Naive thymus-derived CD4-positive, alpha-beta T cell (primary cell): ENCODE measurements at regions of chr15 and their contacts with region 1.

Region 1: DNA sequence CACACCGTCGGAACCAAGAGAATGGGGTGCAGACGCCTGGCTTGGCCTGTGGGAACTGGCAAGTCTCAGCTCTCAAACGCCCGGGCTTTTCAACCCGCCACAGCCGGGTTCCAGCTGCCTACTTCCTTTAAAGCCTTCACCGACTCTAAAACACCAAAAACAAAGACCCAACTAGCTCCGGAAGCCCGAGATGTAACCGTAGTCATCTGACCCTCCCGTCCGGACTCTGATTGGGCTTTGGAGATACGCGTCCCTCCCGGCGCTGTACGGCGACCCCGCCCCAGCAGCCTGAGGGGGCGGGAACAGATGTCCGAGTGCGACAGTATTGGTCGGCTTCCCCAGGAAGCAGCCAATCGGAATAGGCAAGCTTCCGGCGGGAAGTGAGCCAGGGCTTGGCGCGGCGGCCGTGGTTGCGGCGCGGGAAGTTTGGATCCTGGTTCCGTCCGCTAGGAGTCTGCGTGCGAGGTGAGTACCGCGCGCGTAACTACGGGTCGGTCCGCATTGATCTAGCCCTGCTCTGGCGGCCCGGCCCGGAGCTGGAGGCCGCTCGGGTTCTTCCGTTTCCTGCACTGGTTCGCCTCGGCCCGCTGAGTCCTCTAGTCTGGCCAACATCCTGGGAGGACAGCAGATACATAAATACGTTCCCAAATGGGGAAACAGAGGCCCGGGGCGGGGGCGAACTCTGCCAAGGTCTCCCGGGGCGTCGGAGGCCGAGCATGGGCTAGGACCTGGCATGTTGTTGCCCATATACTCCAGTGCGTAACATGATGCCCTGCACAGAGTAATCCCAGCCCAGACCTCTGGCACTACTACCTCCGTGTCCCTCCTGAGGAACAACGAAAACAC is at the start of gene BLM:
- DNase-seq: peak; percentile 83 to 98 (median 96)
- ATAC-seq: peak; percentile 100
- H3K4me3 ChIP-seq: peak within 1 kb of the TSS; percentile 75
- H3K4me3 Mint-ChIP-seq: peak within 1 kb of the TSS; percentile 92 to 98 (median 95)
- H3K27ac ChIP-seq: peak within 1 kb of the TSS; percentile 85
- H3K27ac Mint-ChIP-seq: peak within 1 kb of the TSS; percentile 81 to 97 (median 95)
- H3K4me1 ChIP-seq: peaks cover 5 to 9% of the 10 kb centered on the region in 2 donors
- H3K4me1 Mint-ChIP-seq: peaks cover 20 to 35% (median 30%) of the 10 kb centered on the region in 7 donors
- H3K27me3 ChIP-seq: no peaks in the 10 kb centered on the region
- H3K27me3 Mint-ChIP-seq: no peaks in the 10 kb centered on the region
- total RNA-seq, gene BLM: 3.5 to 53.1 (median 6.6) TPM

Region 2: DNA sequence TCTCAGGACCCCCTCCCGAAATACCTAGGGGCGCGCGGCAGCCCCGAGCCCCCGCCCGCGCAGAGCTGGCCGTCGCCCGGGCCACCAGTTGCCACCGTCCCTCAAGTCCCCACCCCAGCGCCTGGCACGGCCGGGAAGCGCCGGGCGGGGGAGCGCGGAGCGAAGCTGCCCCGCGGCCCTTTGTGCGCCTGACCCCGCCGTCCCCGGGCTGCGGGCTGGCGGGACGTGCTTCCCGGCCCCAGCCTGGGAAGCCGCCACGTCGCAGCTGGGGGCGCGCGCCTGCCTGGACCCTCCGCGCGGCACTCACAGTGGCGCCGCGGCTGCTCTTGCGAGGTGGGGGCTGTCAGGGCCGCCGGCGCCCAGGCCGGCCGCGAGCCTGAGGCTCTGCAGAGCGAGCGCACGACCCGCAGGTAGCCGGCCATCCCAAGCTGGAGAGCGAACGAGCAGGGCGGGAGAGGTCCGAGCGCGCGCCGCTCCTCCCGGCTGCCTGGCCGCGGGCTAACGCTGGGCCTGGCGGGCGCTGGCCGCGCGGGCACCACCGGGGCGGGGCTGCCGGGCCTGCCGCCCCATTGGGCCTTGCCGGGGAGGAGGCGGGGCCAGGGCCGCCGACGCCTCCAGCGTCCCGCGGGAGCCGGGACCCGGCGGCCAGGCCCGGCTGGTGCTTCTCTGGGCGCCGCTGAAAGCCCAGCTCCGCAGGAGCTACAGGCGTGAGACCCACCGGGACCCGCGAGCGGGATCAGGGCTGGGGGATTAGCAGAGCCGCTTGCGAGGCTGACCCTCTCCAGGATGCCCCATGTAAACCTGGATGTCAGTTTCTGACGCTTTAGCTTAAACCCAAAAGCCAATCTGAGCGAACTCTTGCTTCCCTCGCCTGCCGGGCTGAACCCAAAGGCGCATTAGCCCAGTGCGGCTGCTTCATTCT is 615.0 kb before region 1 on chr15 and contains the start of gene IDH2:
- CTCF ChIA-PET with region 1: no interaction called
- POLR2A ChIA-PET with region 1: no interaction called
- intact Hi-C with region 1: loop called in 1 of 2 experiments (anchors 5 kb)
- DNase-seq: peak; percentile 60 to 86 (median 74)
- ATAC-seq: peak; percentile 89
- H3K4me3 ChIP-seq: peak within 1 kb of the TSS; percentile 78
- H3K4me3 Mint-ChIP-seq: peak within 1 kb of the TSS; percentile 82 to 97 (median 92)
- H3K27ac ChIP-seq: peak within 1 kb of the TSS; percentile 90
- H3K27ac Mint-ChIP-seq: peak within 1 kb of the TSS; percentile 94 to 99 (median 98)
- H3K4me1 ChIP-seq: peaks cover 38 to 44% of the 10 kb centered on the region in 2 donors
- H3K4me1 Mint-ChIP-seq: peaks cover 43 to 60% (median 52%) of the 10 kb centered on the region in 7 donors
- H3K27me3 ChIP-seq: no peaks in the 10 kb centered on the region
- H3K27me3 Mint-ChIP-seq: peaks cover 0 to 24% (median 0%) of the 10 kb centered on the region in 5 donors
- total RNA-seq, gene IDH2: 32.4 to 230 (median 33.7) TPM

Region 3: DNA sequence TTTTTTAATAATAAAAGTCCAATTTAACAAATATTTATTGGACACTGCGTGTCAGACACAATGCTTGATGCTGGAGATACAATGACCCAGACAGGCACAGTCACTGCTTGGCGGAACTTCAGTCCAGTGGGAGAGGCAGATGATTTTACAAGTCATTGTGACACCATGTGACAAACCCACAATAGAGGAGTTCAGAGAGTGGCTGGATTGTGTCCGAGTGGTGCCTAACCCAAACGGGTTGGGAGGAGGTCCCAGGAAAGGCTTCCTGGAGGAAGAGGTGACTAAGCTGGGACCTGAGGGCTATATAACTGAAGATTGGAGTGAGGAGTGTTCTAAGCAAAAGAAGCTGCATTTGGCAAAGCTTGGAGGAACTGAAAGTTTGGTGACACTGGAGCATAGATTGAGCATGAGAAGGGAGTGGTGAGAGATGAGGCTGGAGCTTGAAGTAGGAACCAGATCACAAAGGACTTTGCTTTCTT is 146.1 kb before region 1 on chr15:
- CTCF ChIA-PET with region 1: no interaction called
- POLR2A ChIA-PET with region 1: no interaction called
- intact Hi-C with region 1: loop called in 1 of 2 experiments (anchors 5 kb)
- DNase-seq: no peak
- ATAC-seq: peak; percentile 71
- H3K4me3 ChIP-seq: no peak overlapping the region
- H3K4me3 Mint-ChIP-seq: peak overlapping the region; percentile 1 to 76 (median 54)
- H3K27ac ChIP-seq: peak overlapping the region; percentile 22
- H3K27ac Mint-ChIP-seq: peak overlapping the region; percentile 3 to 94 (median 86)
- H3K4me1 ChIP-seq: peaks cover 39 to 92% of the 10 kb centered on the region in 2 donors
- H3K4me1 Mint-ChIP-seq: peaks cover 55 to 97% (median 89%) of the 10 kb centered on the region in 7 donors
- H3K27me3 ChIP-seq: no peaks in the 10 kb centered on the region
- H3K27me3 Mint-ChIP-seq: no peaks in the 10 kb centered on the region

Region 4: DNA sequence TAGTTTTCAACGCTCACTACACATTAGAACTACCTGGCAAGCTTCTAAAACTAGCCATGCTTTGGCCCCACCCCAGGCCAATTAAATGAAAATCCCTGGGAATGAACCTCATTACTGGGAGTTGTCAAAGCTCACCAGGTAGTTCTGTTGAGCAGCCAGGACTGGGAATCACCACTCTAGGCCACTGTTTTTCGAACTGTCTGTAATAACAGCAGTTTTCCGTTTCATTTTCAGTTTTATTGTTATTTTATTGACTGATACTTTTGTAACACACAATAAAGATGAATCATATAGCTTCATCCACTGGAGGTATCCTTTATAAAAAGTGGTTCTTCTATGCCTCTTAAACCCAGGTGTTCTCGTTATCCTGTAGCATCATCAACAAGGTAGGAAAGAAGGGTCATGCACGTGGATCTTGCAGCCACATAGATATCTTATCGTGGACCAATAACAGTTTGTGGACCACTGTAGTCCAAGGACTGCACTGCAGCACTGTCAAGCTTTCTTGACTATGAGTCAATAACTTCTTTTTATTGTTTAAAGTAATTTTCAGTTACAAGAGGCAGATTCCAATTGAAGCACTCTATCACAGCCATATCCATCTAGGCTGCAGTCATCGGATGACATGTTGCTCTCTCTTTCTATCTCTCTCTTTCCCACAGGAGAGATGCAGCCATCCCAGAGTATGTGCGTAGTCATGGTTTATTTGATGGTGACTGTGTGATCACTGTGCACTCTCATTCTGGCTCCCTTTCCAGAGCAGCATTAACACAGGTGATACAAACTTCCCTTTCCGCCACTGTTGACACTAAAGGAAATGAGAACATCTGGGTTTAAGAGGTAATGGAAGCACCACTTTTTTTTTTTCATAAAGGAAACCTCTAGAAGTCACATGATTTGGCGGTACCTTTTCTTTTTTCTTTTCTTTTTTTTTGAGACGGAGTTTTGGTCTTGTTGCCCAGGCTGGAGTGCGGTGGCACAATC is 39.1 kb before region 1 on chr15:
- CTCF ChIA-PET with region 1: interaction called, 5 read pairs
- POLR2A ChIA-PET with region 1: no interaction called
- intact Hi-C with region 1: loop called in 1 of 2 experiments (anchors 5 kb)
- DNase-seq: peak in 7 of 9 donors; percentile 57 to 79 (median 70)
- ATAC-seq: peak; percentile 84
- H3K4me3 ChIP-seq: peak overlapping the region; percentile 18
- H3K4me3 Mint-ChIP-seq: peak overlapping the region; percentile 51 to 87 (median 71)
- H3K27ac ChIP-seq: no peak overlapping the region
- H3K27ac Mint-ChIP-seq: peak overlapping the region; percentile 21 to 96 (median 92)
- H3K4me1 ChIP-seq: peaks cover 5 to 18% of the 10 kb centered on the region in 2 donors
- H3K4me1 Mint-ChIP-seq: peaks cover 12 to 58% (median 26%) of the 10 kb centered on the region in 7 donors
- H3K27me3 ChIP-seq: no peaks in the 10 kb centered on the region
- H3K27me3 Mint-ChIP-seq: peaks cover 0 to 4% (median 0%) of the 10 kb centered on the region in 5 donors

Region 5: DNA sequence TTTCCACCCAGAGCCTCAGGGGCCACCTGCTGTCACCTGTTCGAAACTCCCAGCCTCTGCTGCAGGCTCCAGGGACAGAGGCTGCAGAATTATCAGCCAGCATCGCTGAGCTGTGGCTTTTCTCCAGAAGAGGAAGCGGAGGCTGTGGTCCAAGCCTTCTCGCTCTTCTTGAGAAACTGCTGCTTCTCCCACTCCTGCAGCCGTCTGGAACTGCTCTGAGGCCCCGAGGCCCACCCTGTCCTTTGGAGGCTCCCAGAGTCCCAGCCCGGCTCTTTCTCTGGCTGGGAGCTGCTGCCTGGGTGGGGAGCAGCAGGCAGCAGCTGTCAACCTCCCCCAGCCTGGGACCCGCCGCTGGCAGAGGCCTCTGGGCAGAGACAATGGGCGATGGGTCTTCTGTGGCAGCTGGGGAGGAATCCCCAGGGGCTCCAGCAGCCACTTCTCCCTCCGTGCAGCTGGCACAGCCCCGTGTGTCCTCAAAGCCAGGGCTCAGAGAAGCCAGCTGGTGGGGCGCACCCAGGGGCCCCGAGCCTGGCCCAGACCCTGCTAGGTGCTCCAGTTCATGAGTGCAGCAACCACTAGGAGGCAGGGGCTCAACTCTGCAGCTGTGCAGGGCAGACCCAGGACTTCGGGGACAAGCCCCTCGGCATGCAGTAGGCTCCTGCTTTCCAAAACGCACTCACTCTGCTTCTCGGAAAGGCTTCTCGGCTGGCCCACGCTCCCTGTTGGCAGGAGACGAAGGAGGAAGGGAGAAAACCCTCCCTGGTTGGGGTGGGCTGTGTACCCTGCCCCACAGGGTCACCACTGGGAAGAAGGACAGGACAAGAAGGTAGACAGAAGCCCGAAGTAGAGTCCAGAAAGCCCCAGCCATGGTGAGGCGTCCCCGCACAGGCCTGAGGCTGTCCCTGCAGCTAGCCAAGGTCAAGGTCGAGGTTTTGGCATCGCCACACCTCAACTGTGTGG is 101.3 kb after region 1 on chr15:
- CTCF ChIA-PET with region 1: no interaction called
- POLR2A ChIA-PET with region 1: no interaction called
- intact Hi-C with region 1: loop called in 1 of 2 experiments (anchors 5 kb)
- DNase-seq: peak in 2 of 9 donors; percentile 13 to 21
- ATAC-seq: peak; percentile 68
- H3K4me3 ChIP-seq: no peak overlapping the region
- H3K4me3 Mint-ChIP-seq: peak overlapping the region in 3 of 10 donors; percentile 29 to 79 (median 50)
- H3K27ac ChIP-seq: no peak overlapping the region
- H3K27ac Mint-ChIP-seq: peak overlapping the region in 5 of 9 donors; percentile 31 to 94 (median 55)
- H3K4me1 ChIP-seq: peaks cover 0 to 12% of the 10 kb centered on the region in 2 donors
- H3K4me1 Mint-ChIP-seq: peaks cover 0 to 76% (median 10%) of the 10 kb centered on the region in 7 donors
- H3K27me3 ChIP-seq: no peaks in the 10 kb centered on the region
- H3K27me3 Mint-ChIP-seq: no peaks in the 10 kb centered on the region

Region 6: GRCh38 chr15:90886041-90886614 is 168.9 kb after region 1 on chr15:
- CTCF ChIA-PET with region 1: interaction called, 3 read pairs
- POLR2A ChIA-PET with region 1: no interaction called
- intact Hi-C with region 1: loop called (anchors 1 to 2 kb)
- DNase-seq: peak; percentile 49 to 85 (median 72)
- ATAC-seq: peak; percentile 79
- H3K4me3 ChIP-seq: no peak overlapping the region
- H3K4me3 Mint-ChIP-seq: peak overlapping the region in 2 of 10 donors; percentile 42 to 69
- H3K27ac ChIP-seq: no peak overlapping the region
- H3K27ac Mint-ChIP-seq: peak overlapping the region in 2 of 9 donors; percentile 59 to 87
- H3K4me1 ChIP-seq: peaks cover 6 to 7% of the 10 kb centered on the region in 2 donors
- H3K4me1 Mint-ChIP-seq: peaks cover 0 to 43% (median 11%) of the 10 kb centered on the region in 7 donors
- H3K27me3 ChIP-seq: no peaks in the 10 kb centered on the region
- H3K27me3 Mint-ChIP-seq: peaks cover 0 to 6% (median 4%) of the 10 kb centered on the region in 5 donors

Region 7: GRCh38 chr15:91790836-91791235 is 1073.6 kb after region 1 on chr15:
- CTCF ChIA-PET with region 1: no interaction called
- POLR2A ChIA-PET with region 1: no interaction called
- intact Hi-C with region 1: no loop called
- DNase-seq: no peak
- ATAC-seq: no peak
- H3K4me3 ChIP-seq: no peak overlapping the region
- H3K4me3 Mint-ChIP-seq: no peak overlapping the region
- H3K27ac ChIP-seq: no peak overlapping the region
- H3K27ac Mint-ChIP-seq: no peak overlapping the region
- H3K4me1 ChIP-seq: no peaks in the 10 kb centered on the region
- H3K4me1 Mint-ChIP-seq: no peaks in the 10 kb centered on the region
- H3K27me3 ChIP-seq: no peaks in the 10 kb centered on the region
- H3K27me3 Mint-ChIP-seq: peaks cover 5 to 18% (median 14%) of the 10 kb centered on the region in 5 donors